ENCODE measurements at regions of chr5 and their contacts with region 1.

Region 1: GRCh38 chr5:72161951-72162350 is 54.7 kb downstream of the MAP1B start:
- DNase-seq: no peak
- H3K4me3 ChIP-seq: no peak overlapping the region
- H3K27ac ChIP-seq: no peak overlapping the region
- H3K27me3 ChIP-seq: no peaks in the 10 kb centered on the region
- CTCF ChIP-seq: no peak

Region 2: GRCh38 chr5:72130351-72130761 is 31.6 kb before region 1 on chr5:
- CTCF ChIA-PET with region 1: interaction called, 12 read pairs
- POLR2A ChIA-PET with region 1: interaction called, 3 read pairs
- DNase-seq: peak; percentile 27
- H3K4me3 ChIP-seq: no peak overlapping the region
- H3K27ac ChIP-seq: no peak overlapping the region
- H3K27me3 ChIP-seq: no peaks in the 10 kb centered on the region
- CTCF ChIP-seq: no peak

Measured in AG04450 (cell line).